ENCODE measurements at regions of chr17 and their contacts with region 1.

Region 1: GRCh38 chr17:46061435-46061834 is 62.4 kb downstream of the STH start:
- DNase-seq: peak in 1 of 4 experiments; percentile 35
- ATAC-seq: peak; percentile 84
- H3K4me3 ChIP-seq: no peak overlapping the region
- H3K27ac ChIP-seq: no peak overlapping the region
- H3K4me1 ChIP-seq: peaks cover 0 to 5% of the 10 kb centered on the region in 2 experiments; a peak in 2 of 5 replicates
- H3K27me3 ChIP-seq: no peaks in the 10 kb centered on the region
- CTCF ChIP-seq: peak in 1 of 3 experiments; percentile 56; a peak in 3 of 6 replicates
- EP300 ChIP-seq: no peak
- POLR2A ChIP-seq: no peak
- RAD21 ChIP-seq: peak in 1 of 2 experiments; percentile 37; a peak in 2 of 4 replicates

Region 2: DNA sequence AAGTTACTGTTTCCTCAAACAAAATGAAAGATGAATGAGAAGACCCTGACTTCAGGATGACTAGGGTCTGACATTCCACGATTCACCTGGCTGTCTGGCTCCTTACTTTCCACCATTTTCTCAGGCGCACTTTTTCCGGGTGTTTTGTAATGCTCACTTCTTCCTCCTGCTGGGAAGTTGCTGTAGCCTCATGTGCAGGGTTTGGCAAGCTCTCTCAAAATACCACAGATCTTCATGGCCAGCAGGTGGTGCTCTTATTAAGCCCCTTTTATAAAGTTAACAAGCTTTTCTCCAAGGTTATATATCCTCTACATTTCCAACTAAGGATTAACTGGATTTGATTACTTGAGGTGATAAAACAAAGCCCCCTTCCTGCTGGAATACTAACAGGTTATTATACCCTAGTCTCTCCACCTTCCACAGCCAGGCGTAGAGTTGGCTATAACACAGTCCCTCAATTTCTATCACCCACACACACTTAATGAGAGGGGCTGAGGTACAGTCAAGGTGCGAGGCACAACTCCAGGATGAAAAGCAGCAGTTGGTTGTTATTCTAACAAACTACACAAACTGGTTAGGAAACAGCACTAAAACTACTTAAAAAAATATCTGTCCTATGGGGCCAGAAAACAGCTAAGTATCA is 17.0 kb before region 1 on chr17:
- CTCF ChIA-PET with region 1: interaction called, 4 read pairs
- POLR2A ChIA-PET with region 1: interaction called, 15 read pairs
- in situ Hi-C with region 1: no loop called
- intact Hi-C with region 1: no loop called
- DNase-seq: peak; percentile 52 to 83 (median 60)
- ATAC-seq: peak; percentile 93
- H3K4me3 ChIP-seq: no peak overlapping the region
- H3K27ac ChIP-seq: no peak overlapping the region
- H3K4me1 ChIP-seq: peaks cover 0 to 5% of the 10 kb centered on the region in 2 experiments; a peak in 2 of 5 replicates
- H3K27me3 ChIP-seq: no peaks in the 10 kb centered on the region
- CTCF ChIP-seq: peak; percentile 92 to 98 (median 98)
- EP300 ChIP-seq: no peak
- POLR2A ChIP-seq: no peak
- RAD21 ChIP-seq: peak; percentile 78

Region 3: DNA sequence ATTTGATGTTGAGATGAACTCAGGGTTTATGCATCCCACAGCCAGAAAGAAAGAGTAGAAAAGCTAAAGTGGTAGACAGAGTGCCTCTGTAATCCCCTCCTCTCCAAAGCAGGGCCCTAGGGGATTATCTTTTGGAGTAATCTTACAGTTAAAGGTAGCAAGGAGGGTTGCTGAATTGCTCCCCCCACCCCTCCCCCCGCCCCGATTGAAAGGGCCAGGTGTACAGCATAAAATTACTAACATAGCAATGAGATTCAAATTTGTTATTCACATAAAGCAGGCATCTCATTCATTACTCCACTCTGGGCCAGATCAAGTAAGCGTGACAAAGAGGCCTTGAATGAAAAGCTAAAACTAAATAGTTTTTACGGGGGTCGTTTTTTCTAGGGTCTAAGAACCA is 10.4 kb after region 1 on chr17:
- CTCF ChIA-PET with region 1: no interaction called
- POLR2A ChIA-PET with region 1: interaction called, 12 read pairs
- in situ Hi-C with region 1: no loop called
- intact Hi-C with region 1: no loop called
- DNase-seq: no peak
- ATAC-seq: no peak
- H3K4me3 ChIP-seq: no peak overlapping the region
- H3K27ac ChIP-seq: no peak overlapping the region; the same call in 2 of the 3 replicates
- H3K4me1 ChIP-seq: peaks cover under 1 to 6% of the 10 kb centered on the region in 2 experiments; a peak in 2 of 5 replicates
- H3K27me3 ChIP-seq: no peaks in the 10 kb centered on the region
- CTCF ChIP-seq: no peak
- EP300 ChIP-seq: no peak
- POLR2A ChIP-seq: no peak
- RAD21 ChIP-seq: no peak